PC-9 (cell line): ENCODE measurements at regions of chr9 and their contacts with region 1.

Region 1: GRCh38 chr9:129910628-129911567 is 75.6 kb downstream of the USP20 start:
- DNase-seq: peak; percentile 74 to 98
- H3K4me3 ChIP-seq: no peak overlapping the region
- H3K27ac ChIP-seq: peak overlapping the region; percentile 93
- H3K4me1 ChIP-seq: peaks cover 29% of the 10 kb centered on the region
- H3K27me3 ChIP-seq: no peaks in the 10 kb centered on the region
- CTCF ChIP-seq: no peak

Region 2: GRCh38 chr9:129258124-129258822 is 652.6 kb before region 1 on chr9:
- CTCF ChIA-PET with region 1: no interaction called
- POLR2A ChIA-PET with region 1: no interaction called
- intact Hi-C with region 1: no loop called
- DNase-seq: peak; percentile 78 to 90
- H3K4me3 ChIP-seq: peak overlapping the region; percentile 50
- H3K27ac ChIP-seq: no peak overlapping the region
- H3K4me1 ChIP-seq: peaks cover 16% of the 10 kb centered on the region
- H3K27me3 ChIP-seq: 0 out of 2 replicates have a peak, but pooled peaks cover 5% of the 10 kb centered on the region
- CTCF ChIP-seq: no peak

Region 3: GRCh38 chr9:129544761-129545160 is 366.1 kb before region 1 on chr9:
- CTCF ChIA-PET with region 1: no interaction called
- POLR2A ChIA-PET with region 1: no interaction called
- intact Hi-C with region 1: no loop called
- DNase-seq: no peak
- H3K4me3 ChIP-seq: no peak overlapping the region
- H3K27ac ChIP-seq: no peak overlapping the region
- H3K4me1 ChIP-seq: peaks cover 15% of the 10 kb centered on the region; the same call in 1 of the 2 replicates
- H3K27me3 ChIP-seq: no peaks in the 10 kb centered on the region
- CTCF ChIP-seq: no peak

Region 4: GRCh38 chr9:129938291-129938979 is 27.5 kb after region 1 on chr9:
- CTCF ChIA-PET with region 1: no interaction called
- POLR2A ChIA-PET with region 1: no interaction called
- intact Hi-C with region 1: no loop called
- DNase-seq: no peak
- H3K4me3 ChIP-seq: no peak overlapping the region
- H3K27ac ChIP-seq: no peak overlapping the region
- H3K4me1 ChIP-seq: no peaks in the 10 kb centered on the region
- H3K27me3 ChIP-seq: no peaks in the 10 kb centered on the region
- CTCF ChIP-seq: no peak

Region 5: DNA sequence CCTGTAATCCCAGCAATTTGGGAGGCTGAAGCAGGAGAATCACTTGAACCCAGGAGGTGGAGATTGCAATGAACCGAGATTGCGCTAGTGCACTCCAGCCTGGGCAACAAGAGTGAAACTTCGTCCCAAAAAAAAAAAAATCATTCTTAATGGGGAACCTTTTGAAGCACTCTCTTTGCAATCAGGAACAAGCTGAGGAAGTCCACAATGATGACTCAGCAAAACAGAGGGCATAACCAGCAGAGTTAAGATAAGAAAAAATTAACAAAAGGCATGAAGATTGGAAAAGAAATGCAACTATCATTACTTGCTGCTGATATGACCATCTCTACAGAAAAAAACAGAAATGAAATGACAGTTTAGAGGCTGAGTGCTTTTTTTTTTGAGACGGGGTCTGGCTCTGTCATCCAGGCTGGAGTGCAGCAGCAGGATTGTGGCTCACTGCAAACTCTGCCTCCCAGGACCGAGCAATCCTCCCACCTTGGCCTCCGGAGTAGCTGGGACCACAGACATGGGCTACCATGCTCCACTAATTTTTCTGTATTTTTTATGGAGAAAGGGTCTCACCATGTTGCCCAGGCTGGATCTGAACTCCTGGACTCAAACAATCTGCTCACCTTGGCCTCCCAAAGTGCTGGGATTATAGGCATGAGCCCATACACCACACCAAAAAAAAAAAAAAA is 44.1 kb after region 1 on chr9:
- CTCF ChIA-PET with region 1: no interaction called
- POLR2A ChIA-PET with region 1: interaction called, 11 read pairs
- intact Hi-C with region 1: no loop called
- DNase-seq: no peak
- H3K4me3 ChIP-seq: no peak overlapping the region
- H3K27ac ChIP-seq: peak overlapping the region; percentile 43; the same call in 1 of the 2 replicates
- H3K4me1 ChIP-seq: peaks cover 8% of the 10 kb centered on the region
- H3K27me3 ChIP-seq: no peaks in the 10 kb centered on the region
- CTCF ChIP-seq: no peak

Region 6: DNA sequence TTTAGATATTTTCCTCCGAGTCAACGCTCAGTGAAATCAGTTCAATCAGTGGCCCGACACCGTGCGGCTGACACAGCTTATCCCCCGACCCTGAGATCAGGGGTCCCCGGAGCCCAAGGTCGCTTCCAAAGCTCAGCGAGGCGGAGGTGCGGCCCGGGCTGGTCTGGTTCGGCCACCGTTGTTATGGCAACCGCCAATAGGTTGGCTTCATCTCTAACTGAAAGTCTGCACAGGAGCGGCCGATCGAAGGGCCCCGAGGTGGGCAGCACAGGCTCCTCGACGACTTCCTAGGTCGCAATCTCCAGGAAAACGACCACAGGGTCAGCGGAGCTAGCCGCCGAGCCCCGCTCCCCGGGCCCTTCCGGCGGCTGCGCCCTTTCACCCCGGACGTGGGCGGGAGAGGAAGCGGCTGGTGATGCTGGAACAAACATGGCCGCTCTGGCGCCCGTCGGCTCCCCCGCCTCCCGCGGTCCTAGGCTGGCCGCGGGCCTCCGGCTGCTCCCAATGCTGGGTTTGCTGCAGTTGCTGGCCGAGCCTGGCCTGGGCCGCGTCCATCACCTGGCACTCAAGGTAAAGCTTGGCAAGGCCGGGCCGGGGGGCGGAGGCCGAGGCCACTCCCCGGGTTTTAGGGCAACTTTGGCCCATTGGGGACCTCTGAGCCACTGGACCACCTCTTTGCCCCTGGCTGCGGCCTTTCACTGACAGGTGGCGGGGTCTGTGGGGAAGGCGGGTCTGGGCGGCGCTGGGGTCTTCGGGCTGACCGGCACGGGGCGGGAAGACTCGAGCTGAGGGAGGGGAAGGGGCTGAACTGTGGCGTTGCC is 142.8 kb after region 1 on chr9 and contains the start of gene GPR107:
- CTCF ChIA-PET with region 1: no interaction called
- POLR2A ChIA-PET with region 1: no interaction called
- intact Hi-C with region 1: loop called (anchors 5 kb)
- DNase-seq: peak; percentile 60 to 77
- H3K4me3 ChIP-seq: peak within 1 kb of the TSS; percentile 96
- H3K27ac ChIP-seq: peak within 1 kb of the TSS; percentile 53
- H3K4me1 ChIP-seq: peaks cover 28% of the 10 kb centered on the region
- H3K27me3 ChIP-seq: no peaks in the 10 kb centered on the region
- CTCF ChIP-seq: no peak
- total RNA-seq, gene GPR107: 66.4 and 77.4 TPM in 2 replicates

Region 7: GRCh38 chr9:130073373-130073772 is 162.5 kb after region 1 on chr9:
- CTCF ChIA-PET with region 1: no interaction called
- POLR2A ChIA-PET with region 1: interaction called, 25 read pairs
- intact Hi-C with region 1: no loop called
- DNase-seq: no peak
- H3K4me3 ChIP-seq: no peak overlapping the region
- H3K27ac ChIP-seq: no peak overlapping the region
- H3K4me1 ChIP-seq: peaks cover 5% of the 10 kb centered on the region; the same call in 1 of the 2 replicates
- H3K27me3 ChIP-seq: no peaks in the 10 kb centered on the region
- CTCF ChIP-seq: no peak

Region 8: DNA sequence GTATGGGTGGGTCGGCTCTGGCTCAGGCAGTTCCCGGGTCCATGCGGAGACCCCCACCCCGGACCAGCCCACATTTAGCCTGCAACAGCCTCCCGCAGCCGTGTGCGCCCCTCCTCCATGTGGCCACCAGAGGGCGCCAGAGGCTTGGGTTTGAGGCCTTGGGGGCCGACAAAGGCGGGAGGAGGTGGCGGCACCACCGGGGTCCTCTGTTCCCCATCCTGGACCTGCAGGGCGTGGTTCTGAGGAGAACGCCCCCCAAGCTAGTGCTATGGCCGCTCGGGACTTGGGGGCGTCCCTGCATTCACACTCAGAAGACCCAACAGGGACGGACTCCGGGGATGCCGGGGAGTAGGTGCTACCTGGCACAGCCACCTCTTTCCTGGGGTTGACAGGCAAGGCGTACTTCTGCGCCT is 550.3 kb after region 1 on chr9:
- CTCF ChIA-PET with region 1: interaction called, 11 read pairs
- POLR2A ChIA-PET with region 1: no interaction called
- intact Hi-C with region 1: no loop called
- DNase-seq: peak in 1 of 2 experiments; percentile 55
- H3K4me3 ChIP-seq: no peak overlapping the region
- H3K27ac ChIP-seq: no peak overlapping the region
- H3K4me1 ChIP-seq: no peaks in the 10 kb centered on the region
- H3K27me3 ChIP-seq: no peaks in the 10 kb centered on the region
- CTCF ChIP-seq: peak; percentile 93